H1 (cell line): ENCODE measurements at regions of chr12 and their contacts with region 1.

Region 1: DNA sequence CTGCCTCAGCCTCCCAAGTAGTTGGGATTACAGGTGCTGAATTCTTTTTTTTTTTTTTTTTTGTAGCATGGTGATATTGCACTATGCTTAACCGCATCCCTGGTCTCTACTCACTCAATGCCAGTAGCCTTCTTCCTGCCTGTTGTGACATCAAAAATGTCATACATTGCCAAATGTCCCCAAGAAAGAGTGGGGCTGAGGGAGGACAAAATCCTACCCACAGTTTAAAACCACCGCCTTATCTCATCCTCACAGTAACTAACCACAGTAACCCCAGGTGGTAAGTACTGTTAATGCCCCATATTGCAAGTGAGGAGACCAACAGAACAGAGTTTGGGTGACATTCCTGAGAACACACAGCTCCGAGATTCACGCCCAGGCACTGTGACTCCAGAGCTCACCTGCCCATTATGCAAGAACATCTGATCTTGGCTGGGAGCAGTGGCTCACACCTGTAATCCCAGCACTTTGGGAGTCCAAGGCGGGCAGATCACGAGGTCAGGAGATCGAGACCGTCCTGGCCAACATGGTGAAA is 19.6 kb downstream of the MORN3 start:
- DNase-seq: no peak
- H3K4me3 ChIP-seq: no peak overlapping the region
- H3K27ac ChIP-seq: no peak overlapping the region
- H3K4me1 ChIP-seq: peaks cover 0 to 5% (median 2%) of the 10 kb centered on the region in 4 experiments; a peak in 3 of 7 replicates
- H3K27me3 ChIP-seq: no peaks in the 10 kb centered on the region
- CTCF ChIP-seq: no peak
- EP300 ChIP-seq: no peak
- POLR2A ChIP-seq: no peak
- RAD21 ChIP-seq: no peak

Region 2: DNA sequence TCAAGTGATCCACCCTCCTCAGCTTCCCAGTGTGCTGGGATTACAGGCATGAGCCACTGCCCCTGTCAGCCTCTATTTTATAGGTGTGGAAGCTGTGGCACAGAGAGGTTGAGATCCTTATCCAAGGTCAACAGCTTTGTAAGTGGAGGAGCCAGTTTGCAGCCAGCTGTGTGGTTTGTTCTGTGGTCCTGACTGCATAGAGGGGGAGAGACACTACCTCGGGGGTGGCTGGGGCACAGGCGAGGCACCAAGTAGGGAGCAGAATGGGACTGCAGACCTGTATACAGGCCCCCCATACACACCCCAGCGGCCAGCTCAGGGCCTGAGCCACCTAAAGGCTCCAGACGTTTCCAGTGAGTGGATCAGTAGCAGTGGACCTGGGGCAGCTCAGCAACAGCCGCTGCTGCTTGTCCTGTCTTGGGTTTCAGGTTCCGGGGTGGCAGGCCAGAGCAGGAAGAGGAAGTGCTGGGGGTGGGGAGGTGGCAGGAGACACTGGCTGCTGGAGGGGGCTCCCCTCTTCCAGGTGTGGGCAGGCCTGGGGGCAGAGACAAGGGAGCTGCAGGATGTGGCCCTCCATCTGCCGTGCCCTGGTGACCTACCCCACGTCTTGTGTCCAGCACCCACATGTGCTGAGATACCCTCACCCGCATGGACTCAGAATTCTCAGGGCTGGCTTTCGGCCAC is 12.5 kb before region 1 on chr12:
- CTCF ChIA-PET with region 1: interaction called, 14 read pairs
- POLR2A ChIA-PET with region 1: interaction called, 15 read pairs
- DNase-seq: no peak
- H3K4me3 ChIP-seq: no peak overlapping the region
- H3K27ac ChIP-seq: no peak overlapping the region
- H3K4me1 ChIP-seq: peaks cover 2 to 10% (median 8%) of the 10 kb centered on the region in 4 experiments; a peak in 6 of 7 replicates
- H3K27me3 ChIP-seq: no peaks in the 10 kb centered on the region
- CTCF ChIP-seq: no peak
- EP300 ChIP-seq: no peak
- POLR2A ChIP-seq: no peak
- RAD21 ChIP-seq: no peak

Region 3: DNA sequence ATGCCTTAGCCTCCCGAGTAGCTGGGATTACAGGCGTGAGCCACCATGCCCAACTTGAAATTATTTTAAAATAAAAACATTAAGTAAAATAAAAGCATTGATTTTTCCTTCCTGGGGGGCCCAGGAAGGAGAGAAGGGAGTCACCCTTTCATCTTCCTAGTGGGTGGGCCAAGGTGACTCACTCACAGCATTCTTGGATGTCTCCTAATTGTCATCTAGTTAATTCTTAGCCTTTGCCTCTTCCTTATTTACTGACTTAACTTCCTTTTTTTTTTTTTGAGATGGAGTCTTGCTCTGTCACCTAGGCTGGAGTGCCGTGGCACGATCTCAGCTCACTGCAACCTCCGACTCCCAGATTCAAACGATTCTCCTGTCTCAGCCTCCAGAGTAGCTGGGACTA is 91.9 kb after region 1 on chr12:
- CTCF ChIA-PET with region 1: no interaction called
- POLR2A ChIA-PET with region 1: no interaction called
- DNase-seq: no peak
- H3K4me3 ChIP-seq: no peak overlapping the region
- H3K27ac ChIP-seq: no peak overlapping the region
- H3K4me1 ChIP-seq: no peaks in the 10 kb centered on the region
- H3K27me3 ChIP-seq: no peaks in the 10 kb centered on the region
- CTCF ChIP-seq: no peak
- EP300 ChIP-seq: no peak
- POLR2A ChIP-seq: no peak
- RAD21 ChIP-seq: no peak

Region 4: DNA sequence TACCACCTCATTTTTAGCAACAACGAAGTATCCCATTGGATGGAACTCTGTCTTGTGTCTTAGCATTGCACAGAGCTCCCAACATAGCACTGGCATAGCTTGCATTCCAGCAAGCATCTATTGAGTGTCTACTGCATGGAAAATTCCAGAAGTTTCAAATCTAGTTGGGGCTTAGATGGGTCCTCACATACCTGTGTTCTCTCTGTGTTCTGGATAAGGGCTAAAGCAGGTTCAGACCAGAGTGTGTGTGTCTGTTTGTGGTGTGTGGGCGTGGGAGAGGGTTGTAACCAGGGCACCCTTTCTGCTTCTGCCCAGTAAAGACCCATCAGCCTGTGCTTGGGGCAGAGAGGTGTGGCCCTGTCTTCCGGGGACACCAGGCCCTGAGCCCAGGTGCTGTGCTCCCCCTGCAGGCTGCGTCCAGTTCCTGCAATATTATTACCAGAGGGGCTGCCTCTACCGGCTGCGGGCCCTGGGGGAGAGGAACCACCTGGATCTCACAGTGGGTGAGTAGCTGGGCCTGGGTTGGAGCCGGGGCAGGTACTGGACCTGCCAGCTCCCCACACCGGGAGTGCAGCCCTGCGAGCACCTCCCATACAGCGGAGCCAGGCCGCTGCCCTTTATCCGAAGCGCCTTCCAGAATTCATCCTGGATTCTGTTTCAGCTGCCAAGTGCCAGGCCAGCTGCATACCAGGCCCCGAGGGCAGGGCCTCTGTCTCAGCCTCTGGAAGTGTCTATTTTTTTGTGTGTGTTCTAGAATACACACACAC is 123.3 kb after region 1 on chr12:
- CTCF ChIA-PET with region 1: no interaction called
- POLR2A ChIA-PET with region 1: no interaction called
- DNase-seq: peak in 1 of 2 experiments; percentile 89
- H3K4me3 ChIP-seq: no peak overlapping the region
- H3K27ac ChIP-seq: no peak overlapping the region
- H3K4me1 ChIP-seq: peaks cover 0 to 18% (median 14%) of the 10 kb centered on the region in 4 experiments; a peak in 6 of 7 replicates
- H3K27me3 ChIP-seq: no peaks in the 10 kb centered on the region
- CTCF ChIP-seq: peak; percentile 95 to 98 (median 96)
- EP300 ChIP-seq: no peak
- POLR2A ChIP-seq: no peak
- RAD21 ChIP-seq: peak; percentile 91 to 95

Region 5: DNA sequence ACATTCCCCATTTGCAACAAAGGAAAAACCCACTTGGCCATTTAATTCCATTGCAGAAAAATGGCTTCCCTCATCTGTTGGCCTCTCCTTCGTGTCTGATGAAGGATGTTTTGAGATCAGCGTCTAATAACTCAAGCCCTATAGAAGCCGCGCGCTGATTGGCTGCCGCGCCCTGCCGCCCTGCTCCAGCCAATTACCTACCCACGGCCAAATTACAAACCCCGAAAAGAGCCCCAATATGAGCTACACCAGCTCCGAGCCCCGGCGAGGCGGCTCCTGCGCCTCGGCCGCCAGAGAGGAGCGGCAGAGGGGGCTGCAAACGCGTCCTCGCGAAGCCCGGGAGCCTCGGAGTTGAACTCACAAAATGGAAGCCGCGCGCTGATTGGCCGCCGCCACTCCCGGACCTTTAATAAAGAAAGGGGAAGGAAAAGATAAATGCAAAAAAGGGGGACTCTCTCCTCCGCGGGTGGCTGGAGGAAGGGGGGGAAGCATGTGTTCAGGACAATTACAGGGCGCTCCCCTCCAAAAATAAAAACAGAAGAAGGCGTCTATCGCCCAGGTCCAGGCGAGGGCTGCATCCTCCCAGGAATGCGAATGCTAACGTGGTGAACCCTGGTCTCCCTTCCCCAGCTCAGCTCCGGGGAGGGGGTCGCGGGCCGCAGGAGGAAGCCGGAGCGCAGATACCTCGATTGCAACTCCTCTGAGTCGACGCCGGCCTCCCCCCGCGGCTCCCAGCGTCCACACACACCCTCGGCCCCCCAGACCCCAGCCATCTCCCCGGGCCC is 153.2 kb after region 1 on chr12:
- CTCF ChIA-PET with region 1: no interaction called
- POLR2A ChIA-PET with region 1: no interaction called
- DNase-seq: peak; percentile 70 to 88
- H3K4me3 ChIP-seq: peak overlapping the region; percentile 70 to 88 (median 81)
- H3K27ac ChIP-seq: peak overlapping the region; percentile 97
- H3K4me1 ChIP-seq: peaks cover 12 to 28% (median 21%) of the 10 kb centered on the region in 4 experiments
- H3K27me3 ChIP-seq: no peaks in the 10 kb centered on the region
- CTCF ChIP-seq: no peak
- EP300 ChIP-seq: no peak
- POLR2A ChIP-seq: peak in 1 of 2 experiments; percentile 97; a peak in 2 of 3 replicates
- RAD21 ChIP-seq: no peak